H1 (cell line): ENCODE measurements at regions of chr7 and their contacts with region 1.

Region 1: DNA sequence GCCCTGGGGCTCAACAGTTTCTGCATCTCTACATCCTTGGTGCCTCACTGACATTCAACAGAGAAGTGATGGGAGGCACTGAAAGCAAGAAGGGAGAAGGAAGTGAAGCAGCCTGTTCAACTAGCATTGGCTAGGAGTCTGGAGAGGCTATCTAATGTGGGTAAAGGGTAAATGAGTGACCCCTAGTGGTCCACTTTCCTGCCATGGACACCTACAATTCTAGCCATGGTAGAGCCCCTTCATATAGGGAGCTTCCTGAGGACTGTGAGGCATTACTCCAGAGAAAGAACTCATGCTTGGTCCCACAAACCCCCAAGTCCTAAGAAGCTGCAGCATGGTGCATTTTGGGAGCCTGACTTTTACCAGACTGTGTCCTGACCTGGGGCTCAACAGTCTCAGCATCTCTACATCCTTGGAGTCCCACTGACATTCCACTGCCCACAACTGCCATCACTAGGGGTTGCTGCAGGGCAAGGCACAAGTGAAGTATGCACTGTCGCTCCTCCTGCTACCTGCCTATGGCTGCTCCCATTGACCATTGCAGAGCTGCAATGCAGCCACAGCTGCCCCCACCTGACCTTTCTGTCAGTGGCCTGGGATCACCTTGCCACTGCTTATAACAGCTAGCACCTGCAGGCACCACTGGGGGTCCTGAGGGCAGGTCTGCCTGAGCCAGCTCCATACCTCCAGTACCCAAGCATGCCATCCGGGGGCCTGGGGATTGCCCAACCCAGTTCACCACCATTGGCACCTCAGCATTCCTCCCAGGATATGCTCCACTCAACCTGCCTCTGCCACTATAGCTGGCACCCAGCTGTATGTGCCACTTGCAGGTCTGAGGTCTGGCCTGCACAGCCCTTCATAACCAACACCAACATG is 44.1 kb upstream of the CDK6 start:
- DNase-seq: peak; percentile 27 to 70
- H3K4me3 ChIP-seq: no peak overlapping the region
- H3K27ac ChIP-seq: no peak overlapping the region
- H3K4me1 ChIP-seq: no peaks in the 10 kb centered on the region
- H3K27me3 ChIP-seq: no peaks in the 10 kb centered on the region
- CTCF ChIP-seq: peak; percentile 66 to 84 (median 66)
- EP300 ChIP-seq: no peak
- POLR2A ChIP-seq: no peak
- RAD21 ChIP-seq: peak; percentile 77 to 78

Region 2: GRCh38 chr7:92621026-92621540 is 259.4 kb before region 1 on chr7:
- CTCF ChIA-PET with region 1: interaction called, 10 read pairs
- POLR2A ChIA-PET with region 1: no interaction called
- DNase-seq: peak in 1 of 2 experiments; percentile 56
- H3K4me3 ChIP-seq: no peak overlapping the region
- H3K27ac ChIP-seq: no peak overlapping the region
- H3K4me1 ChIP-seq: no peaks in the 10 kb centered on the region
- H3K27me3 ChIP-seq: no peaks in the 10 kb centered on the region
- CTCF ChIP-seq: peak in 2 of 3 experiments; percentile 62 to 72; a peak in 3 of 4 replicates
- EP300 ChIP-seq: no peak
- POLR2A ChIP-seq: no peak
- RAD21 ChIP-seq: peak; percentile 88 to 91

Region 3: DNA sequence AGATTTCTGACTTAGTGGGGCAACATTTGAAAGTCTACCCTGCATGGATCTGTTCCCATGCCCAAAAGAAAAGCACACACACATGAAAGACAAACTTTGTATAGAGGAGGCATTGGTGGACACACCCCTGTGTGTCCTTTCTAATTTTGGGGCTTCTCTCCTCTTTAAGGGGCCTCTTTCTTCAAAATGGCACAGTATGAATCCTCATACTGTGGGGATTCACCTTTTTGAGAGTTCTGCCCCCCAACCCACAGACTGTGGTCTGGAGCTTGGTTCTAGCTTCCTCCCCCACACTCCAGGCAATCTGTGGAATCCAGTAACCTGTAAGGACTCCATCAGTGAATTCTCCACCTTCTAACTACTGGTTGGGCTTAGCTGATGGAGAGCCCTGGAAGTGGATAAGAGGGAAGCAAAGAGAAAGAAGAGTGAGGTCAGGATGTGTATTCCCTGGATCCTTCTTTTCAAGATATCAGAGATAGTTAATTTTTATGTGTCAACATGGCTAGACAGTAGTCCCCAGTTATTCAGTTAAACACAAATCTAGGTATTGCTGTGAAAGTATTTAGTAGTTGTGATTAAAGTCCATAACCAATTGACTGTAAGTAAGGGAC is 11.7 kb before region 1 on chr7:
- CTCF ChIA-PET with region 1: interaction called, 23 read pairs
- POLR2A ChIA-PET with region 1: no interaction called
- DNase-seq: no peak
- H3K4me3 ChIP-seq: no peak overlapping the region
- H3K27ac ChIP-seq: no peak overlapping the region
- H3K4me1 ChIP-seq: no peaks in the 10 kb centered on the region
- H3K27me3 ChIP-seq: no peaks in the 10 kb centered on the region
- CTCF ChIP-seq: no peak
- EP300 ChIP-seq: no peak
- POLR2A ChIP-seq: no peak
- RAD21 ChIP-seq: no peak

Region 4: DNA sequence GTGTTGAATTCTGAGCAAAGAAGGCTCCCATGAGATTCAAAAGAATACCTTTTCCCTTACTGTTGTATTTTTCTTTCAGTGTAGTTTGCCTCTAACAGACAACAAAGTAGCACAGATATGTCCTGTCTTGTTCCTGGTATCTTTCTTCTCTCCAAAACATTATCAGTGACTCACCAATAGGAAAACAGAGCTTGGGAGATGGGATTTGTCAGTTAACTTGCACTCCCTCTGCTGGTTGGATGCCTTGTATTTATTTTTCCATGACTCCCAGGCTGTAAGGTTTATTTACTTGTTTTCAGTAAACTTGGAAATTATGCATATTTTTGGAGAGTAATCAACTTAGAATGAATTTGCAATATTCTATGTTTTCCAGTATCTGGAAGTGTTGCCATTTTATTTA is 107.6 kb after region 1 on chr7:
- CTCF ChIA-PET with region 1: interaction called, 20 read pairs
- POLR2A ChIA-PET with region 1: no interaction called
- DNase-seq: no peak
- H3K4me3 ChIP-seq: no peak overlapping the region
- H3K27ac ChIP-seq: no peak overlapping the region
- H3K4me1 ChIP-seq: peaks cover 0 to 4% (median 0%) of the 10 kb centered on the region in 4 experiments; a peak in 2 of 7 replicates
- H3K27me3 ChIP-seq: no peaks in the 10 kb centered on the region
- CTCF ChIP-seq: peak in 2 of 3 experiments; percentile 47 to 63; a peak in 2 of 4 replicates
- EP300 ChIP-seq: no peak
- POLR2A ChIP-seq: no peak
- RAD21 ChIP-seq: peak; percentile 58 to 59

Region 5: DNA sequence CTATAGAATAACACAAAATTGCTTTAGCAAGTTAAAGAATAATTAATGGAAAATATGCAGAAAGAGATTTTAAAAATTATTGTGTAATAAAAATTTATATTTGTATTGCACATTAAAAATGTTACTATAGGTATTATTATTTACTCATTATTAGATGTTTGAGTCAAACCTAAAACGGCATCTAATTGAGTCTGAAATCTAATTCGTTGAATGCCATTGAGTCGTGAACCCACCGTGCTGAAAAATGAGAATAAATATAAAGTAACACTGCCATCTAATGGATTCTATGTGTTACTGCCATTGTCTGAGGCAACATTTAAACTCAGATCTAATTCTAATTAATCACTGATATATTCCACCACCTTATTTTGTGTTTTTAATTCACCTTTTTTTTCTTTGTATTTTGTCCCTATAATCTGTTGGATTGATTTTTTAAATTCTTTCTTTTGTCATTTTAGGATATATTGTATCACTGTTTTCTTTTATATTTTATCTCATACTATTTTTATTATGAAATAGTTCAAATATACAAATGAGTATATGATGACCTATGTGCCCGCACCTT is 175.2 kb after region 1 on chr7:
- CTCF ChIA-PET with region 1: interaction called, 14 read pairs
- POLR2A ChIA-PET with region 1: no interaction called
- DNase-seq: no peak
- H3K4me3 ChIP-seq: no peak overlapping the region
- H3K27ac ChIP-seq: no peak overlapping the region
- H3K4me1 ChIP-seq: no peaks in the 10 kb centered on the region
- H3K27me3 ChIP-seq: no peaks in the 10 kb centered on the region; a peak in 1 of 7 replicates
- CTCF ChIP-seq: peak in 2 of 3 experiments; percentile 43 to 47; a peak in 2 of 4 replicates
- EP300 ChIP-seq: no peak
- POLR2A ChIP-seq: no peak
- RAD21 ChIP-seq: peak; percentile 82 to 85